Aorta (tissue), 5 donors: ENCODE measurements at regions of chr9 and their contacts with region 1.

Region 1: GRCh38 chr9:69397384-69398214 is 72.6 kb downstream of the ENTREP1 start:
- DNase-seq: no peak
- ATAC-seq: peak; percentile 66
- H3K4me3 ChIP-seq: no peak overlapping the region
- H3K27ac ChIP-seq: peak overlapping the region in 1 of 2 donors; percentile 58
- H3K4me1 ChIP-seq: peaks cover 0 to 3% of the 10 kb centered on the region in 2 donors
- H3K27me3 ChIP-seq: no peaks in the 10 kb centered on the region

Region 2: GRCh38 chr9:69035438-69036308 is 361.9 kb before region 1 on chr9 and contains the start of gene FXN:
- intact Hi-C with region 1: loop called in 1 of 2 experiments (anchors 10 kb)
- DNase-seq: peak; percentile 86 to 93
- ATAC-seq: peak; percentile 97
- H3K4me3 ChIP-seq: peak within 1 kb of the TSS; percentile 33 to 91
- H3K27ac ChIP-seq: peak within 1 kb of the TSS in 1 of 2 donors; percentile 68
- H3K4me1 ChIP-seq: no peaks in the 10 kb centered on the region
- H3K27me3 ChIP-seq: no peaks in the 10 kb centered on the region
- total RNA-seq, gene FXN: 7.1 to 7.3 TPM